Activated CD4-positive, alpha-beta T cell treated with anti-CD3 and anti-CD28 coated beads for 36 hours (primary cell): ENCODE measurements at regions of chr19 and their contacts with region 1.

Region 1: GRCh38 chr19:796692-797527 is at the start of gene PTBP1:
- DNase-seq: peak; percentile 100
- ATAC-seq: peak; percentile 86
- H3K4me3 Mint-ChIP-seq: peak within 1 kb of the TSS; percentile 93
- H3K27ac Mint-ChIP-seq: peak within 1 kb of the TSS; percentile 95
- H3K4me1 Mint-ChIP-seq: peaks cover 25% of the 10 kb centered on the region
- H3K27me3 Mint-ChIP-seq: no peaks in the 10 kb centered on the region
- total RNA-seq, gene PTBP1: 584 to 738 TPM

Region 2: GRCh38 chr19:610801-611505 is 186.0 kb before region 1 on chr19:
- CTCF ChIA-PET with region 1: no interaction called
- POLR2A ChIA-PET with region 1: no interaction called
- intact Hi-C with region 1: loop called in 1 of 2 experiments (anchors 5 kb)
- DNase-seq: peak; percentile 75
- ATAC-seq: peak; percentile 45
- H3K4me3 Mint-ChIP-seq: peak overlapping the region; percentile 72
- H3K27ac Mint-ChIP-seq: peak overlapping the region; percentile 97
- H3K4me1 Mint-ChIP-seq: peaks cover 25% of the 10 kb centered on the region
- H3K27me3 Mint-ChIP-seq: peaks cover 2% of the 10 kb centered on the region

Region 3: DNA sequence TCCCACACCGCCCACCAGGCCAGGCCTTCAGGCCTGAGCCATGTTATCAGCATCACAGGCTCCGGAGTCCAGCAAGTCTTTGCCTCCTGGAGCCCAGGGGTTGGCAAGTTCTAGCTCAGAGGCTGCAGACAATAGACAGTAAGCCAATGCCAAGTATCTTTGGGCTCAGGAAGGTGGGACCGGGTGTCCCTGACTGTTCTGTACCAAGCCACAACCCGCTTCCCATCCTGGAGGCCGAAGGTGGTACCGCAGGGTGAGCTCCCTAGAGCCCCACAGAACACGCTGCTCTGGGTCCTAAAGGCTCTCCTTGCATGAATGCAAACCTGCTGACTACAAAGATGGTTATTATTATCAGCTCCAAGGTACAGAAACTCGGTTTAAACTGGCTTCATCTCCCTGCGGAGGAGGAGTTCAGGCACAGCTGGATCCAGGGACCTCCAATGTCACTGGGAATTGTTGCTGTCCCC is 126.3 kb before region 1 on chr19:
- CTCF ChIA-PET with region 1: no interaction called
- POLR2A ChIA-PET with region 1: no interaction called
- intact Hi-C with region 1: no loop called
- DNase-seq: no peak
- ATAC-seq: peak; percentile 53
- H3K4me3 Mint-ChIP-seq: no peak overlapping the region
- H3K27ac Mint-ChIP-seq: no peak overlapping the region
- H3K4me1 Mint-ChIP-seq: peaks cover 3% of the 10 kb centered on the region
- H3K27me3 Mint-ChIP-seq: peaks cover 15% of the 10 kb centered on the region

Region 4: DNA sequence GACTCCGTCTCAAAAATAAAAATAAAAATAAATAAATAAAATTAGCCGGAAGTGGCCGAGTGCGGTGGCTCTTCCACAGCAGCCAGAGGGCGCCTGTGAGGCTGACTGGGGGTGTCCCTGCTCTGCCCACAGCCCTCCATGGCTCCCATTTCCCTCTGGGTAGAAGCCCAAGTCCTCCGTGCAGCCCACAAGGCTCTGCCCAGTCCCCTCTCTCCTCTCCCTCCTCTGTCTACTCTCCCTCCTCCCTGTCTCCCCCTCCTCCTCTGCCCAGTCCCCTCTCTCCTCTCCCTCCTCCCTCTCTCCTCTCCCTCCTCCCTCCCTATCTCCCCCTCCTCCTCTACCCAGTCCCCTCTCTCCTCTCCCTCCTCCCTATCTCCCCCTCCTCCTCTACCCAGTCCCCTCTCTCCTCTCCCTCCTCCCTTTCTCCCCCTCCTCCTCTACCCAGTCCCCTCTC is 25.6 kb before region 1 on chr19:
- CTCF ChIA-PET with region 1: interaction called, 4 read pairs
- POLR2A ChIA-PET with region 1: no interaction called
- intact Hi-C with region 1: loop called in 1 of 2 experiments (anchors 2 kb)
- DNase-seq: peak; percentile 73
- ATAC-seq: peak; percentile 76
- H3K4me3 Mint-ChIP-seq: no peak overlapping the region
- H3K27ac Mint-ChIP-seq: no peak overlapping the region
- H3K4me1 Mint-ChIP-seq: peaks cover 2% of the 10 kb centered on the region
- H3K27me3 Mint-ChIP-seq: no peaks in the 10 kb centered on the region

Region 5: DNA sequence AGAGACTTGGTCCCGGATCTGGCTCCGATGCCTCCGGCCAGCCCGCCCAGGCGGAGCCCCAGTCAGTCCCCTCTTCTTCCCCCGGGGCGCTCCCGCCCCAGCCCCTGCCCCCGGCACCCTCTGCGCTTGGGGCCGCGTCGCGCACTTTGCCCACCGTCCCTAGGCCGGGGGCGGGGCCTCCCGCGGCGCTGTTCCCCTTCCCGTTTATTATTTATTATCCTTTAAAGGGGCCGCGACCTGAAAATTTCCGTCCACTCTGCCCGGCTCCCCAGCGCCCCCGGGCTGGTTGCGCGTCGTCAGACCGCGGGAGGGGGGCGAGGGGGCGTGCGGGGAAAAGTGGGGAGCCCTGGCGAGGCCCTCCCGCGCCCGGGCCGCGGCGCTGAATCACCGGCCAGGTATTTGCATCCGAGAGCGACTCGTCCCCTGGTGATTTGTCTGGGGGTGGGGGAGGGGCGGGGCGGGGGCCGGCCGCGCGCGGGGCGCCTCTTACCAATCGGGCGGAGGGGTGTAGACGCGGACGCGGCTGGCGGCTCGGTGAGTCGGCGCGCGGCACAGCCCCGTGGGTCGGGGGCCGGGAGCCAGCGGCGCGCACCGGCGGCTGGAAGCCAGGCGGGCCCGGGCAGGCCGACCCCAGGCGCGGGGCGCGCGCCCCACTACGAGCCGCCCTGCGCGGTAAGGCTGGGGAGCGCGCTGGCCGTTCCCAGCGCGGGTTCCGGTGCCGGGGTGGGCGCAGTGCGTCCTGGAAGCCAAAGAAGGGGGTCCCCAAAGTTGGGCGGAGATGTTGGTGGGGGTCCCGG is 128.8 kb after region 1 on chr19 and contains the start of gene ARID3A:
- CTCF ChIA-PET with region 1: no interaction called
- POLR2A ChIA-PET with region 1: no interaction called
- intact Hi-C with region 1: loop called in 1 of 2 experiments (anchors 1 kb)
- DNase-seq: peak; percentile 85
- ATAC-seq: peak; percentile 42
- H3K4me3 Mint-ChIP-seq: peak within 1 kb of the TSS; percentile 70
- H3K27ac Mint-ChIP-seq: peak within 1 kb of the TSS; percentile 37
- H3K4me1 Mint-ChIP-seq: peaks cover 17% of the 10 kb centered on the region
- H3K27me3 Mint-ChIP-seq: no peaks in the 10 kb centered on the region
- total RNA-seq, gene ARID3A: 25.1 to 36.0 TPM

Region 6: GRCh38 chr19:977058-977692 is 180.3 kb after region 1 on chr19:
- CTCF ChIA-PET with region 1: no interaction called
- POLR2A ChIA-PET with region 1: no interaction called
- intact Hi-C with region 1: no loop called
- DNase-seq: no peak
- ATAC-seq: no peak
- H3K4me3 Mint-ChIP-seq: no peak overlapping the region
- H3K27ac Mint-ChIP-seq: no peak overlapping the region
- H3K4me1 Mint-ChIP-seq: no peaks in the 10 kb centered on the region
- H3K27me3 Mint-ChIP-seq: no peaks in the 10 kb centered on the region

Region 7: GRCh38 chr19:1131738-1132551 is 335.0 kb after region 1 on chr19:
- CTCF ChIA-PET with region 1: no interaction called
- POLR2A ChIA-PET with region 1: no interaction called
- intact Hi-C with region 1: loop called in 1 of 2 experiments (anchors 2 kb)
- DNase-seq: peak; percentile 96
- ATAC-seq: peak; percentile 60
- H3K4me3 Mint-ChIP-seq: peak overlapping the region; percentile 91
- H3K27ac Mint-ChIP-seq: peak overlapping the region; percentile 96
- H3K4me1 Mint-ChIP-seq: peaks cover 46% of the 10 kb centered on the region
- H3K27me3 Mint-ChIP-seq: no peaks in the 10 kb centered on the region

Region 8: DNA sequence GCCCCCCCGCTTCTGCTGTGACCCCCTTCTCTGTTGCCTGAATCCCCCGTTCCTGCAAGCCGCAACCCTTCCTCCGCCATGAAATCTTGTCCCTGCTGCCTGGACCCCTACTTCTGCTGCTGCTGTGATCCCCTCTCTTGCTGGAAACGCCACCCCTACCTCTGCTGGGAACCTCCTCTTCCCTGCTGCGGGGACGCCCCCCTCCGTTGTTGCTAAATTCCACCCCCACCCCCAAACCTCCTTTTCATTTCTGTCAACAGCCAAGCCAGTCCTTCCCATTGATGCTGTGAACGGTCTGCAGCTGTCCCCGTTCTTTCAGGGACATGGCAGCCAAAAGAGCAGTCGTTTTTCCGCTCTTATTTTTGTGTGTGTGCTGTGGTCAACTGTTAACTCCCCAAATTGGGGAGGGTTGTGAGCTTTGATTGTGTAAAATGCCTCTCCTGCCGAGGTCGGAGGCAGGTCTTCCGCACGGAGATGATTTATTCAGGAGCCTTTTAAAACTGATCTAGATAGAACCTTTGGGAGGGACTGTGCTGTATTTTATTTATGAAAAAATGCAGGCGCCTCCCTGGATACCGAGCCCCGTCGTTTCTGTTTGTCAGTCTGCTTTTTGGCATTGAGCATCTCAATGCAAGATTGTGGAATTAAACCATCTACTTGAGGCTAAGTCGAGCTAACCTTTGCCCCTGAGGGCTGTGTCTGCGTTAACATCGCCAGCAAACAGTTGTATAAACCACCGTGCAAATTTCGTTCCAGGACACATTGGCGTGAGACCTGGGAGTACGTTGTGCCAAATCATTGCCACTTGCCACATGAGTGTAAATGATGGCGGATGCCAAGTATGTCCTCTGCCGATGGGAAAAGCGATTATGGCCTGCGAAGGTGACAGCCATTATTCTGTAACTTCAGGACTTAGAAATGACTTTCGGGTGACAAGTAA is 558.9 kb after region 1 on chr19:
- CTCF ChIA-PET with region 1: no interaction called
- POLR2A ChIA-PET with region 1: no interaction called
- intact Hi-C with region 1: loop called in 1 of 2 experiments (anchors 1 kb)
- DNase-seq: peak; percentile 51
- ATAC-seq: no peak
- H3K4me3 Mint-ChIP-seq: peak overlapping the region; percentile 77
- H3K27ac Mint-ChIP-seq: peak overlapping the region; percentile 49
- H3K4me1 Mint-ChIP-seq: peaks cover 9% of the 10 kb centered on the region
- H3K27me3 Mint-ChIP-seq: no peaks in the 10 kb centered on the region